ENCODE measurements at regions of chr1 and their contacts with region 1.

Region 1: GRCh38 chr1:6523566-6523965 is 30.7 kb downstream of the NOL9 start:
- DNase-seq: peak in 1 of 2 experiments; percentile 29
- H3K4me3 ChIP-seq: no peak overlapping the region
- H3K27ac ChIP-seq: no peak overlapping the region
- H3K4me1 ChIP-seq: peaks cover 5 to 11% (median 7%) of the 10 kb centered on the region in 4 experiments
- H3K27me3 ChIP-seq: no peaks in the 10 kb centered on the region
- CTCF ChIP-seq: peak; percentile 56 to 87 (median 85)
- EP300 ChIP-seq: no peak
- POLR2A ChIP-seq: no peak
- RAD21 ChIP-seq: peak; percentile 74 to 83

Region 2: DNA sequence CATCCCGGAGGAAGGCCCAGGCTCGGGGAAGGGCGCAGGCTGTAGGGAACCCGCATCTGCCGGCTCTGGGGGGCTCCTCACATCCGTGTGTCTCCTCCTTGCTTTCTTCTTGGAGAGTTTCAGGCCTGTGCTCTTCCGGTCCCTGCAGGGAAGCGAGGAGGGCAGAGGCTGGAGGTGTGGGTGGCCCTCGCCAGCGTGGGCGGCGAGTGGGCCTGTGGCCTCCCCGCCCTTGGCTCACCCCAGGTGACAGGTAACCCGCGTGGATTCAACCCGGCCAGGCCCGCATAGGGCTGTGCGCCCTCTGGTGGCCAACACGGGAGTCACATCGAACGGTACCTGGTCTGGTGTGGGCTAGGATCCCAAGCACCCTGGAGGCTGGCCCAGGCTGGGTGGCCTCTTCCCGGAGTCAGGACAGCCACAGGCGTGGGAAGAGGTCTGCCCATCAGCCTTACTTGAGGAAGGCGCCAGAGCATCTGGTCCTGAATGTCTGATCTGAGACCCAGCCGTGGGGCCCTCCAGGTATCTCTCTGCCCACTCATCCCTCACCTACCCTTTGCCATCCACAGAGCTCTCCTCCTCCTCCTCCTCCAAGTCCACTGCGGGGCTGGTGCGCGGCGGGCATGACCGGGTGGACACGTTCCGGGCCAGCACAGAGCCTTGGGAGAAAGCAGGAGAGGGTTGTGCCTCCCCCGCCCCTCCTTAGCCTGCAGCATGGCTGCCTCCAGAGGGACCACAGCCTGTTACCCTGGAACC is 48.0 kb before region 1 on chr1:
- CTCF ChIA-PET with region 1: interaction called, 25 read pairs
- POLR2A ChIA-PET with region 1: interaction called, 3 read pairs
- DNase-seq: peak in 1 of 2 experiments; percentile 91
- H3K4me3 ChIP-seq: no peak overlapping the region
- H3K27ac ChIP-seq: no peak overlapping the region
- H3K4me1 ChIP-seq: peaks cover 0 to 22% (median 14%) of the 10 kb centered on the region in 4 experiments; a peak in 6 of 7 replicates
- H3K27me3 ChIP-seq: no peaks in the 10 kb centered on the region; a peak in 1 of 7 replicates
- CTCF ChIP-seq: peak in 2 of 3 experiments; percentile 81 to 92; a peak in 3 of 4 replicates
- EP300 ChIP-seq: no peak
- POLR2A ChIP-seq: no peak
- RAD21 ChIP-seq: peak; percentile 30 to 54; a peak in 3 of 4 replicates

Region 3: GRCh38 chr1:6489799-6490180 is 33.8 kb before region 1 on chr1:
- CTCF ChIA-PET with region 1: interaction called, 48 read pairs
- POLR2A ChIA-PET with region 1: interaction called, 4 read pairs
- DNase-seq: peak in 1 of 2 experiments; percentile 93
- H3K4me3 ChIP-seq: peak overlapping the region; percentile 45 to 80 (median 68)
- H3K27ac ChIP-seq: no peak overlapping the region
- H3K4me1 ChIP-seq: peaks cover 0 to 23% (median 13%) of the 10 kb centered on the region in 4 experiments; a peak in 6 of 7 replicates
- H3K27me3 ChIP-seq: no peaks in the 10 kb centered on the region; a peak in 2 of 7 replicates
- CTCF ChIP-seq: peak in 2 of 3 experiments; percentile 84 to 90; a peak in 3 of 4 replicates
- EP300 ChIP-seq: no peak
- POLR2A ChIP-seq: no peak
- RAD21 ChIP-seq: peak; percentile 68 to 74

Region 4: GRCh38 chr1:6497183-6497897 is 26.2 kb before region 1 on chr1:
- CTCF ChIA-PET with region 1: interaction called, 107 read pairs
- POLR2A ChIA-PET with region 1: interaction called, 7 read pairs
- DNase-seq: no peak
- H3K4me3 ChIP-seq: peak overlapping the region; percentile 37 to 82 (median 54)
- H3K27ac ChIP-seq: no peak overlapping the region
- H3K4me1 ChIP-seq: peaks cover 0 to 27% (median 14%) of the 10 kb centered on the region in 4 experiments; a peak in 6 of 7 replicates
- H3K27me3 ChIP-seq: peaks cover 0 to 31% (median 20%) of the 10 kb centered on the region in 4 experiments; a peak in 5 of 7 replicates
- CTCF ChIP-seq: no peak
- EP300 ChIP-seq: no peak
- POLR2A ChIP-seq: no peak
- RAD21 ChIP-seq: no peak

Region 5: GRCh38 chr1:6513320-6513801 is 10.2 kb before region 1 on chr1:
- CTCF ChIA-PET with region 1: interaction called, 19 read pairs
- POLR2A ChIA-PET with region 1: interaction called, 9 read pairs
- DNase-seq: no peak
- H3K4me3 ChIP-seq: no peak overlapping the region
- H3K27ac ChIP-seq: no peak overlapping the region
- H3K4me1 ChIP-seq: no peaks in the 10 kb centered on the region; a peak in 3 of 7 replicates
- H3K27me3 ChIP-seq: no peaks in the 10 kb centered on the region
- CTCF ChIP-seq: no peak
- EP300 ChIP-seq: no peak
- POLR2A ChIP-seq: no peak
- RAD21 ChIP-seq: no peak

Region 6: GRCh38 chr1:6538956-6539355 is 15.4 kb after region 1 on chr1:
- CTCF ChIA-PET with region 1: interaction called, 57 read pairs
- POLR2A ChIA-PET with region 1: interaction called, 9 read pairs
- DNase-seq: no peak
- H3K4me3 ChIP-seq: no peak overlapping the region
- H3K27ac ChIP-seq: no peak overlapping the region
- H3K4me1 ChIP-seq: no peaks in the 10 kb centered on the region
- H3K27me3 ChIP-seq: no peaks in the 10 kb centered on the region
- CTCF ChIP-seq: no peak
- EP300 ChIP-seq: no peak
- POLR2A ChIP-seq: no peak
- RAD21 ChIP-seq: no peak

Region 7: DNA sequence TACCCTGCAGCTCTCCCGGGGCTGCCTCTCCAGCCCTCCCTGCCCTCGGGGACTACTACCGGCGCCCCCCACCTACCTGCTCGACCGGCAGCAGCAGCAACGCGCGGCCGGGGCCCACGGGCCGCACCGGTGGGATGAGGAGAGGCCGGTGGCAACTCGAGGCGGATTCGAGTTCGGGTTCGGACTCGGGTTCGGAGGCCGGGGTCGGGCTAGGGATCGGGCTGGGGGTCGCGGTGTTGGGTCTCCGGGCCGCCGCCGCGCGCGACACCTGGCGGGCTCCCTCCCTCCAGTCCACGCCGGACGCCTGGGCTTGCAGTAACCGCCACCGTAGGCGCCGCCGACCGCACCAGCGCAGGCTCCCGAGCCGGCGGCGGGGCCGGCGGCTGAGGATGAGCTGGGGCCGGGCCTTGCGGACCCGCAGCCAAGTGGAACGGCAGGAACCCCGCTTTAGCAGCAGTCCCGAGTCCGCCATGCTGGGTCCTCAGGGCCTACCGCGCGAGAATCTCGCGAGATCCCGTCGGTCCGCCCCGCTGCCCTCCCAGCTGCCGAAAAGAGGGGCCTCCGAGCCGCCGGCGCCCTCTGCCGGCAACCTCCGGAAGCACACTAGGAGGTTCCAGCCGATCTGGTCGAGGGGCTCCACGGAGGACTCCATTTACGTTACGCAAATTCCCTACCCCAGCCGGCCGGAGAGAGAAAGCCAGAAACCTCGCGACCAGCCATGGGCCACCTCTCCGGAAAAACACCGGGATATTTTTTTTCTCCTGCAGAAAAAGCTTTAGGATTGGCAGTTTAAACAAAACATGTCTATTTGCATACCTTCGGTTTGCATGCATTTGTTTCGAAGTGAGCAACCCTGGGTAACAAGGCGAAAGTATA is 30.7 kb after region 1 on chr1 and contains the start of gene NOL9:
- CTCF ChIA-PET with region 1: interaction called, 11 read pairs
- POLR2A ChIA-PET with region 1: interaction called, 15 read pairs
- DNase-seq: peak; percentile 73 to 99
- H3K4me3 ChIP-seq: peak within 1 kb of the TSS; percentile 66 to 97 (median 90)
- H3K27ac ChIP-seq: peak within 1 kb of the TSS; percentile 86
- H3K4me1 ChIP-seq: peaks cover 3 to 6% (median 5%) of the 10 kb centered on the region in 4 experiments; a peak in 5 of 7 replicates
- H3K27me3 ChIP-seq: no peaks in the 10 kb centered on the region
- CTCF ChIP-seq: peak; percentile 85 to 93 (median 87)
- EP300 ChIP-seq: no peak
- POLR2A ChIP-seq: peak; percentile 54 to 87
- RAD21 ChIP-seq: peak; percentile 47 to 60
- total RNA-seq, gene NOL9: 38.1 and 42.9 TPM in 2 replicates

Region 8: DNA sequence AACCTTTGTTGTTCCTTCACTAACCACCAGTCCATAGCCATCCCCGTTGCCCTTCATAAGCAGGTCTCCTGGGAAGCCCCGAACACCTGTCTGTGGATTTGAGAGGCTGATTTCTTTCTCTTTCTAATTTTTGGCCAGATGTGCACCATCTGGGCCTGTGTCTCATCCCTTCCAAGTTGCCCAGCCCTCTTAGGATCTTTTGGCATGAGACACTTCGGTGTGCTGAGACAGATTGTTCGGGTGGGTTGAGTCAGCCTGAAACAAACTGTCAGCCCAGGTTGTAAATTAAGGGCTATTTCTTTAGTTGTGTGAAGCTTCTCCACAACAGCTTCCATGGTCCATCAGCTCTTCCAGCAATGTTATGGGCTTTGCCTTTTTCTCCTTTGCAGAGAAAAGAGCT is 179.4 kb after region 1 on chr1:
- CTCF ChIA-PET with region 1: no interaction called
- POLR2A ChIA-PET with region 1: no interaction called
- DNase-seq: no peak
- H3K4me3 ChIP-seq: no peak overlapping the region
- H3K27ac ChIP-seq: no peak overlapping the region
- H3K4me1 ChIP-seq: peaks cover 0 to 4% (median 2%) of the 10 kb centered on the region in 4 experiments; a peak in 3 of 7 replicates
- H3K27me3 ChIP-seq: peaks cover 0 to 4% (median 1%) of the 10 kb centered on the region in 4 experiments; a peak in 3 of 7 replicates
- CTCF ChIP-seq: no peak
- EP300 ChIP-seq: no peak
- POLR2A ChIP-seq: no peak
- RAD21 ChIP-seq: no peak